Right lobe of liver (tissue), 6 donors: ENCODE measurements at regions of chr15 and their contacts with region 1.

Region 1: GRCh38 chr15:34342737-34343575 is at the starts of genes NOP10 and NUTM1:
- DNase-seq: peak; percentile 91 to 93 (median 91)
- ATAC-seq: peak; percentile 94 to 98 (median 96)
- H3K4me3 ChIP-seq: peak within 1 kb of the TSS; percentile 48 to 72 (median 63)
- H3K27ac ChIP-seq: peak within 1 kb of the TSS; percentile 81 to 89 (median 83)
- H3K4me1 ChIP-seq: peaks cover 0 to 9% (median 0%) of the 10 kb centered on the region in 4 donors
- H3K27me3 ChIP-seq: no peaks in the 10 kb centered on the region
- CTCF ChIP-seq: peak; percentile 94 to 97 (median 96)
- POLR2A ChIP-seq: peak; percentile 80
- total RNA-seq, gene NOP10: 59.2 to 177 (median 79.2) TPM
- total RNA-seq, gene NUTM1: not detected

Region 2: DNA sequence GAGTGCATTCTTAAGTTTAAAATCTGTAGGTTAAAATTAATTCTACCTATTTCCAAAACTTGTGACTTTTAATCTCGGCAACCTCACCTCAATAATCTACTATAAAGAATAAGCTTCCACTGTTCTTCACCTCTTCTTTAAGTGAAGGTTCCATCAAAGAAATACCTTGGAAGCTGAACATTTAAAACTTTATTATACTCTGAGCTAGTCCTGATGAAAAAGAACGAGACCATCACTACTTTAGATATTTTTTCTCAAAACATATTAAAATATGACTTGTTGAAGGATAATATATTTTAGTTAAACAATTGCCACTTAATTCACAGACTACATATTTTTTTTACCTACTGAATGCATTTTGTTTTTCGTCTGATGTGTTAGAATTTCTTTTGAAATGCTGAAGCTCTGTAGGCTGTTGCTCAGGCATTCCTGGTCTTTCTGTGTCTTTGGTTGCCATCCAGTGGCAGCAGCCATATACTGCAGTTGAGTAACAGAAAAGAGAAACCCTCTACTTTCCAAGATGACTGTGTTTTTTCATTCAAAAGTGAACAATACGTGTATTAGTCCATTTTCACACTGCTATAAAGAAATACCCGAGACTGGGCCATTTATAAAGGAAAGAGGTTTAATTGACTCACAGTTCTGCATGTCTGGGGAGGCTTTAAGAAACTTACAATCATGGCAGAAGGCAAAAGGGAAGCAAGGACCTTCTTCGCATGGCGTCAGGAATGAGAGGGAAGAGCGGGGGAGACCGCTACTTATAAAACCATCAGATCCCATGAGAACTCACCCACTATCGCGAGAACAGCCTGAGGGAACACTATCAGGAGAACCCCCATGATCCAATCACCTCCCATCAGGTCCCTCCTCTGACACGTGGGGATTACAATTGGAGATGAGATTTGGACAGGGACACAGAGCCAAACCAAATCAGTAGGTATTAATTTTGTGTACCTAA is 245.0 kb after region 1 on chr15:
- intact Hi-C with region 1: loop called in 1 of 2 experiments (anchors 10 kb)
- DNase-seq: peak in 2 of 3 donors; percentile 32 to 60
- ATAC-seq: peak; percentile 73 to 80 (median 76)
- H3K4me3 ChIP-seq: peak overlapping the region in 2 of 3 donors; percentile 22 to 28
- H3K27ac ChIP-seq: no peak overlapping the region
- H3K4me1 ChIP-seq: no peaks in the 10 kb centered on the region
- H3K27me3 ChIP-seq: no peaks in the 10 kb centered on the region
- CTCF ChIP-seq: peak; percentile 76 to 91 (median 80)
- POLR2A ChIP-seq: peak; percentile 79